ENCODE measurements at regions of chr6 and their contacts with region 1.

Region 1: GRCh38 chr6:169959136-169960002 is 207.9 kb downstream of the ERMARD start:
- DNase-seq: no peak
- ATAC-seq: peak in 1 of 2 donors; percentile 15
- H3K4me3 ChIP-seq: no peak overlapping the region
- H3K27ac ChIP-seq: no peak overlapping the region
- H3K4me1 ChIP-seq: no peaks in the 10 kb centered on the region
- H3K27me3 ChIP-seq: no peaks in the 10 kb centered on the region

Region 2: DNA sequence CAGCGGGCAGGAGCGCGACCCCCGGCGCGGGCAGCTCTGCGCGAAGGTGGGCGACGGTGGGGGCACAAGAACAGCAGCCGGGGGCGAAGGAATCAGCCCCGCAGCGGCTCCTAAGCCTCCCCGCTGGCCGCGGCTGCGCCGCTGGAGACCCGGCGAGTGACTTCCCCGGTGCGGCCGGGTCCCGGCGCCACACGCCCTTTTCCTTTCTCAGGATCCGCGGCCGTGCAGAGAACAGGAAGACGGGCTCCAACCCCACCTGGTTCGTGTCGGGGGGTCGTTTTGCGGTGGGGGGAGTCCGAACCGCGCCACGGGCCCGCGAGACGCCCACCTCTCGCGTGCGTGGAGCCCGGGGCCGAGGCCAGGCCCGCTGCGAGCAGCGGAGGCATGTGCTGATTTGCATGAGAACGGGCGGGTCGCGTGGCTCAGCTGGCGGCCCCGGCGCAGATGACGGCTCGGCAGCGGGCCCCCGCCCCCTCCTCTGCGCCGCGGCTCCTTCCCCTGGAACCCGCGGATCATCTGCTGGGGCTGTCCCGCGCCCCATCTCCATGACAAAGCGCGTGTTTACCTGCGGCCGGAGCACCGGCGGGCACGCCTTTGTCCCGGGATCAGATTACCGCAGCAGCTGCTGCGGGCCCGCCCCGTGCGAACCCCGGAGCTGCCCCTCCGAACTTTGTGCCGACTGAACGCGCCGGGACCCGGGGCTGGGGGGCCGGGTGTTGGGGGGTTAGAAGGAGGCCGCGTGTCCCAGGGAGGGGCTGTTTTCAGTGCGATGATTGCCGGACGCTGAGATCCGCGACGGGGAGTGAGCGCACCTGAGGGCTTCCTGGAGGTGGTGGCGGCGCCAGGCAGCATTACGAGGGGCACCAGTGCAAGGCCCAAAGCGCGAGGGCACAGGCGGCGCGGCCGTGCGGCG is 336.4 kb after region 1 on chr6:
- intact Hi-C with region 1: loop called in 2 of 4 experiments (anchors 10 kb)
- DNase-seq: peak in 2 of 3 donors; percentile 65 to 73
- ATAC-seq: peak; percentile 21 to 28
- H3K4me3 ChIP-seq: peak overlapping the region; percentile 38
- H3K27ac ChIP-seq: no peak overlapping the region
- H3K4me1 ChIP-seq: peaks cover 10% of the 10 kb centered on the region
- H3K27me3 ChIP-seq: no peaks in the 10 kb centered on the region

Region 3: GRCh38 chr6:170516783-170517616 is 557.6 kb after region 1 on chr6:
- intact Hi-C with region 1: loop called in 1 of 4 experiments (anchors 10 kb)
- DNase-seq: peak in 2 of 3 donors; percentile 19 to 63
- ATAC-seq: peak; percentile 72 to 79
- H3K4me3 ChIP-seq: no peak overlapping the region
- H3K27ac ChIP-seq: no peak overlapping the region
- H3K4me1 ChIP-seq: no peaks in the 10 kb centered on the region
- H3K27me3 ChIP-seq: no peaks in the 10 kb centered on the region